ENCODE measurements at regions of chr1 and their contacts with region 1.

Region 1: DNA sequence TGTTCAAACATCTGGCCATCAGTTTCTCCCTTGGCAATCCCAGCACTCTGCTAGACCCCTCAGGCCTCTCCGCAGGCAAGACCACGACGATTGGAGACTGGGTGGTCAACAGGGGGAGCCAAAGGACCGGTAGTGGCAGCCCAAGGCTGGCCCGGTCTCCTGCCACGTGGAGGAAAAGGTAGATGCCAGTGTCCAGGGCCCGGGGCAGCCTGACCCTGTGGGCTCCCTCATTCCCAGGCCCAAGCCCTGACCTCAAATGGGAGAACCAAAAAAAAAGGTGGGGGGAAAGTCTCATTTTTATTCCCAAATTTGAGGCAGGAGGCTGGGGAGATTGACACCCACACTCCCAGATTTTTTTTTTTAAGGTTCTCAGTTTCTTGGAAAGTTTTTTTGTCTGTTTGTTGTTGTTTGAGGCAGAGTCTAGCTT is 24.8 kb downstream of the S100A6 start:
- DNase-seq: peak; percentile 70
- ATAC-seq: peak; percentile 78
- H3K4me3 ChIP-seq: no peak overlapping the region
- H3K27ac ChIP-seq: peak overlapping the region; percentile 39
- H3K4me1 ChIP-seq: peaks cover 34 to 91% of the 10 kb centered on the region in 2 experiments
- H3K27me3 ChIP-seq: no peaks in the 10 kb centered on the region
- CTCF ChIP-seq: peak; percentile 90 to 95 (median 92)
- POLR2A ChIP-seq: no peak
- RAD21 ChIP-seq: peak; percentile 100

Region 2: GRCh38 chr1:152761356-152762213 is 749.4 kb before region 1 on chr1:
- CTCF ChIA-PET with region 1: no interaction called
- POLR2A ChIA-PET with region 1: no interaction called
- RAD21 ChIA-PET with region 1: no interaction called
- intact Hi-C with region 1: no loop called
- DNase-seq: no peak
- ATAC-seq: no peak
- H3K4me3 ChIP-seq: no peak overlapping the region
- H3K27ac ChIP-seq: no peak overlapping the region
- H3K4me1 ChIP-seq: no peaks in the 10 kb centered on the region
- H3K27me3 ChIP-seq: peaks cover 32% of the 10 kb centered on the region; the same call in 1 of the 2 replicates
- CTCF ChIP-seq: no peak
- POLR2A ChIP-seq: no peak
- RAD21 ChIP-seq: no peak

Region 3: DNA sequence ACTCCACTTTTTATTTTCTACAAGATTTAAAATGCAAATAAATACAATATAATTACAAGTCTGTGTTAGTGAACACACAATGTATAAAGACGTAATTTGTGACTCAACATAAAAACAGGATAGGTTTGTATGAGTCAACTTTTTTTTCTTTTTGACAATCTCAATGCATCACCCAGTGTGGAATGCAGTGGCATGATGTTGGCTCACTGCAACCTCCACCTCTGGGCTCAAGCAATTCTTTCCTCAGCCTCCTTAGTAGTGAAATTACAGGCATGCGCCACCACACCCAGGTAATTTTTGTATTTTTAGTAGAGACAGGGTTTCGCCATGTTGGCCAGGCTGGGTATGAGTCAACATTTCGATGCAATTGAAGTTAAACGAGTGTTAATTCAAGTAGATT is 410.8 kb before region 1 on chr1:
- CTCF ChIA-PET with region 1: no interaction called
- POLR2A ChIA-PET with region 1: no interaction called
- RAD21 ChIA-PET with region 1: no interaction called
- intact Hi-C with region 1: no loop called
- DNase-seq: peak; percentile 81
- ATAC-seq: peak; percentile 91
- H3K4me3 ChIP-seq: 0 out of 4 replicates have a peak overlapping the region, but pooled peaks of 1 of the 2 experiments have one; percentile 15
- H3K27ac ChIP-seq: peak overlapping the region; percentile 53; the same call in 1 of the 2 replicates
- H3K4me1 ChIP-seq: peaks cover 9 to 20% of the 10 kb centered on the region in 2 experiments; a peak in 3 of 4 replicates
- H3K27me3 ChIP-seq: no peaks in the 10 kb centered on the region
- CTCF ChIP-seq: no peak
- POLR2A ChIP-seq: no peak
- RAD21 ChIP-seq: no peak

Region 4: DNA sequence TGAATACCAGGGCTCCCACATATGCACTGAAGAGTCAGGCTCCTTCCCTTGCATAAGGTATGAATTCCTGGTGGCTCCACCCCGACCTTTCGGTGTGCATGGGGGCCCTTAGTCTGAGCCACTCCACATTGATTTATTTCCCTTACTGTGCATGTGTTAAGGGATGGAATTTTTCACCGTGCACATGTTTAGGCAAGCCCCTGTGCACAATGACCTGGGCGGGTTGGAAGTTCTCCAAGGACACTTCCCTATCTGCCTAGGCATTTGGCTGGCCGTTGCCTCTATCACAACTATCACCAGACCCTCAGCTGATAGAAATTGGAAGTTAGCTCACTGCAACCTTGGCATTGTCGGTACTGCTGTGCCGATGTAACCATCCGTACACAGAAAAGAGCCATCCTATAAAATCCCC is 15.1 kb after region 1 on chr1:
- CTCF ChIA-PET with region 1: interaction called, 10 read pairs
- POLR2A ChIA-PET with region 1: interaction called, 10 read pairs
- RAD21 ChIA-PET with region 1: no interaction called
- intact Hi-C with region 1: no loop called
- DNase-seq: no peak
- ATAC-seq: peak; percentile 41
- H3K4me3 ChIP-seq: no peak overlapping the region; a peak in 1 of 4 replicates
- H3K27ac ChIP-seq: peak overlapping the region; percentile 38; the same call in 1 of the 2 replicates
- H3K4me1 ChIP-seq: peaks cover 21 to 28% of the 10 kb centered on the region in 2 experiments
- H3K27me3 ChIP-seq: no peaks in the 10 kb centered on the region
- CTCF ChIP-seq: no peak
- POLR2A ChIP-seq: no peak
- RAD21 ChIP-seq: no peak

Region 5: DNA sequence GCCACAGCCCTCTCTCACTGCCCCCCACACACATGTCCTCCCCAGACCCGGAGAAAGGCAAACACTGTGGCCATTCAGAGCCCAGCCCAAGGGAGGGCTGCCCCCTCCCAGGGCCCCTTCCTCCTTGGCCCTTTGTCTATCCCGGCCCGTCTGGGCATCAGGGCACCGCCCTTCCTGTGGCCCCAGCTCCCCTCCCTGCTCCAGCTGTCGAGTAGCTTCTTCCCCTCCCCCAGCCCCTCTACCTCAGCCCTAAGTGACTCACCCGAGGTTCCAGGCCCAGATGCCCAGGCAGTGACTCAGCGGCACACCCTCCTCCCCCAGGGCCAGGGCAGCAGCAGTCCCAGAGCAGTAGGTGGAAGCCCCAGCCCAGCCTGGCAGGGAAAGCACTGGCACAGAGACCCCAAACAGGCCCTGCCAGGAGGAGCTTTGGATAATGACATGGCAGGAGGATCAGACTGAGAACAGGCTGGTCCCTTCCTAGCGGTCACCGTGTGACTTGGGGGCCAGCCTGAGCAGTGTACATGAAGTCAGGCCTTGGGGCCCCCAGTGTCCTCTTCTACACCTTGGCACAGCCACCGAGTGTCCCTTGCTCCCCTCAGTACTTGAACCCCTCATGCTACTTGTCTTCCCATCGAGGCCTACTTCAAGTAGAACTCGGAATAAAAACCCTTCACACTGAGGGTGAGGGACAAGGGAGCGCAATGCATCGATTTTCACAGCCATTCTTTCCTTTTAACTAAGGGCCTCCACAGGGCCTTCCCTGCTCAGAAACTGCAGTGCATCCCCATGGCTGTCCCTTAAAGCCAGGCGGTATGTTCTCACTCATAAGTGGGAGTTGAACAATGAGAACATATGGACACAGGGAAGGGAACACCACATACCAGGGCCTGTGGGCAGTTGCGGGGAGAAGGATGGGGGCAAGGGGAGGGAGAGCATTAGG is 55.7 kb after region 1 on chr1:
- CTCF ChIA-PET with region 1: interaction called, 30 read pairs
- POLR2A ChIA-PET with region 1: interaction called, 8 read pairs
- RAD21 ChIA-PET with region 1: interaction called, 6 to 9 read pairs
- intact Hi-C with region 1: loop called (anchors 1 kb)
- DNase-seq: peak; percentile 96
- ATAC-seq: peak; percentile 79
- H3K4me3 ChIP-seq: peak overlapping the region; percentile 23 to 41
- H3K27ac ChIP-seq: peak overlapping the region; percentile 100
- H3K4me1 ChIP-seq: peaks cover 62 to 81% of the 10 kb centered on the region in 2 experiments
- H3K27me3 ChIP-seq: no peaks in the 10 kb centered on the region
- CTCF ChIP-seq: no peak
- POLR2A ChIP-seq: peak; percentile 48
- RAD21 ChIP-seq: no peak

Region 6: GRCh38 chr1:153617675-153618074 is 106.7 kb after region 1 on chr1:
- CTCF ChIA-PET with region 1: interaction called, 9 read pairs
- POLR2A ChIA-PET with region 1: interaction called, 3 read pairs
- RAD21 ChIA-PET with region 1: no interaction called
- intact Hi-C with region 1: loop called (anchors 2 kb)
- DNase-seq: peak; percentile 57
- ATAC-seq: peak; percentile 63
- H3K4me3 ChIP-seq: no peak overlapping the region
- H3K27ac ChIP-seq: peak overlapping the region; percentile 79
- H3K4me1 ChIP-seq: peaks cover 39 to 53% of the 10 kb centered on the region in 2 experiments
- H3K27me3 ChIP-seq: no peaks in the 10 kb centered on the region
- CTCF ChIP-seq: peak in 2 of 3 experiments; percentile 66 to 68; a peak in 4 of 6 replicates
- POLR2A ChIP-seq: no peak
- RAD21 ChIP-seq: no peak

Region 7: GRCh38 chr1:153626922-153627796 is 116.2 kb after region 1 on chr1 and contains the start of gene S100A13:
- CTCF ChIA-PET with region 1: interaction called, 10 read pairs
- POLR2A ChIA-PET with region 1: interaction called, 3 read pairs
- RAD21 ChIA-PET with region 1: interaction called in 1 of 2 experiments, 3 read pairs
- intact Hi-C with region 1: no loop called
- DNase-seq: peak; percentile 93
- ATAC-seq: peak; percentile 87
- H3K4me3 ChIP-seq: peak within 1 kb of the TSS; percentile 65 to 72
- H3K27ac ChIP-seq: peak within 1 kb of the TSS; percentile 89
- H3K4me1 ChIP-seq: peaks cover 18 to 34% of the 10 kb centered on the region in 2 experiments
- H3K27me3 ChIP-seq: no peaks in the 10 kb centered on the region
- CTCF ChIP-seq: peak in 2 of 3 experiments; percentile 87 to 89; a peak in 4 of 6 replicates
- POLR2A ChIP-seq: peak; percentile 94
- RAD21 ChIP-seq: no peak
- total RNA-seq, gene S100A13: 143 TPM

Region 8: DNA sequence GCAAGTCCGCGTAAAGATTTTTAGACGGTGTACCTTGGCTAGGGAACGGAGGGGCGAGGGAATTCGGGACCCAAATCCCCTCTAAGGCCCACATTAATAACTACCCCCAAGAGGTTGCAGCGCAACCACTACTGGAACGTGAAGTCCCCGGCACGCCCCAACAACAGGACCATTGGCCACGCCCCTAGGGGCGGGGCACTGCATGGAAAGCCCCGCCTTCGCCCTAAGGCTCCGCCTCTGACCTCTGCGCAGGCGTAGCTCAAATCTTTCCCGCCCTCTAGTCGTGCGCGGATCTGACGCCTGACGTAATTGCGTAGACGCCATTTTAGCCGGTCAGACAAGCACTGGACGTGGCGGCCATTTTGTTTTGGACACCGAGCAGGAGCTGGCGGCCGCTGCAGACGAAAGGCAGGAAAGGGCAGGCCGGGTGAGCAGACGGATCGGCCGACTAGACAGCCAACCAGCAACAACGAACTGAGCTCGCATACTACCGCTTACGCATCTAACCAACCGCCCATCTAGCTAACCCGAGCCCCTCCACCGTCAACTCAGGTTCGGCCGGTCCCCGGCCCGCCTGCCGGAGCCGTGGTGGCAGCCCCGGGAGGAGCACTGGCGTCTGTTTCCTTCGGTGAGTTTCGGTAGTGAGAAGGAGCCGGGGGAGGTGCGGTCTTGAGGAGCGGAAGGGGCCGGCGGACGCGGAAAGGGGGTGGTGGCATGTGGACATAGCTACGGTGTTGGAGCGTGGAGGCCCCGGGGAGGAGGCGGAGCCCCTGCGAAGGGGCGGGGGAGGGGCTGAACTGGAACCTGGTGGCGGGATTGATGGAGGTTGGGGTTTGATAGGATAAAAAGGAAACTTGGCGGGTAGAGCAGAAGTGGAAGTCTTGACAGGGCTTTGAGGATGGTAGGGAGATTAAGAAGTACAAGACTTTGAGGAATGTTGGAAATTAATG is 123.0 kb after region 1 on chr1 and contains the start of gene CHTOP:
- CTCF ChIA-PET with region 1: interaction called, 11 read pairs
- POLR2A ChIA-PET with region 1: no interaction called
- RAD21 ChIA-PET with region 1: no interaction called
- intact Hi-C with region 1: no loop called
- DNase-seq: peak; percentile 98
- ATAC-seq: peak; percentile 91
- H3K4me3 ChIP-seq: peak within 1 kb of the TSS; percentile 91 to 95
- H3K27ac ChIP-seq: peak within 1 kb of the TSS; percentile 100
- H3K4me1 ChIP-seq: peaks cover 9 to 22% of the 10 kb centered on the region in 2 experiments
- H3K27me3 ChIP-seq: no peaks in the 10 kb centered on the region
- CTCF ChIP-seq: no peak
- POLR2A ChIP-seq: peak; percentile 73
- RAD21 ChIP-seq: no peak
- total RNA-seq, gene CHTOP: 110 TPM

Region 9: DNA sequence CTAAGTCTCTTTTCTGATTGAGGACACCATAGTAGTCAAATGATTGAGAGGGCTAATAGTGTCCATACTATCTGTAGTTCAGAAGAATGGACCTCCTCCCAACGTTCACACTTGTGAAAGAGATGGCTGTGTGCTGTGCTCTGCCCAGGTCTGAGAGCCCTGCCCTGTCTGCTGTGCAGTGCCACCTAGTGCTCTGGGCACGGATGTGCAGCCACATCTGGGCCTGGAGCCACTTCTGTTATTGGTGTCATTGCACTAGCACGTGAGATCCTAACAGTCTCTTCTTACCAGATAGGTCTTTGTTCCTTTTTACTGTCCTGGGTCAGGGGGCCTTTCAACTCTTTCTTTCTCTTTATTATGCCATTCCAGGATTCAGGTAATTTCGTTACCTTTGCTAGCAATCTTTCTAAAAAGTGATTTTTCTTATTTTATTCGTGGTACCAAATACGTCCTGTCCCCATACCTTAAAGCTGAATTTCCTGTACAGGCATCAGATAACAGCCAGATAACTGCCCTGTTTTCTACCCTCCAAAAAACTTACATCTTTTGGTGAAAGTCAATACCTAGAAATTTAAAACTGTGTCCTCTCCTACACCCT is 238.5 kb after region 1 on chr1:
- CTCF ChIA-PET with region 1: no interaction called
- POLR2A ChIA-PET with region 1: no interaction called
- RAD21 ChIA-PET with region 1: no interaction called
- intact Hi-C with region 1: loop called (anchors 1 kb)
- DNase-seq: peak; percentile 45
- ATAC-seq: peak; percentile 100
- H3K4me3 ChIP-seq: no peak overlapping the region
- H3K27ac ChIP-seq: no peak overlapping the region
- H3K4me1 ChIP-seq: no peaks in the 10 kb centered on the region
- H3K27me3 ChIP-seq: no peaks in the 10 kb centered on the region
- CTCF ChIP-seq: peak; percentile 86 to 94 (median 94)
- POLR2A ChIP-seq: no peak
- RAD21 ChIP-seq: peak; percentile 93

Measured in HCT116 (cell line).